Activated T-helper 2 cell treated with anti-CD3 and anti-CD28 coated beads, Interferon-gamma antibody, Interleukin-2, Interleukin-4, amounts not matched to agents 10 μg/mL and 5 μg/mL and 100 μg/mL, durations not matched to agents 14 hours and 24 hours and 36 hours (primary cell): ENCODE measurements at regions of chr4 and their contacts with region 1.

Region 1: GRCh38 chr4:17810260-17811077 is at the starts of genes DCAF16 and NCAPG:
- DNase-seq: peak; percentile 99
- H3K4me3 Mint-ChIP-seq: peak within 1 kb of the TSS; percentile 100
- H3K27ac Mint-ChIP-seq: peak within 1 kb of the TSS; percentile 100
- H3K4me1 Mint-ChIP-seq: peaks cover 62% of the 10 kb centered on the region
- H3K27me3 Mint-ChIP-seq: no peaks in the 10 kb centered on the region
- total RNA-seq, gene DCAF16: 41.1 and 41.7 TPM in 2 replicates
- total RNA-seq, gene NCAPG: 55.9 and 58.2 TPM in 2 replicates

Region 2: DNA sequence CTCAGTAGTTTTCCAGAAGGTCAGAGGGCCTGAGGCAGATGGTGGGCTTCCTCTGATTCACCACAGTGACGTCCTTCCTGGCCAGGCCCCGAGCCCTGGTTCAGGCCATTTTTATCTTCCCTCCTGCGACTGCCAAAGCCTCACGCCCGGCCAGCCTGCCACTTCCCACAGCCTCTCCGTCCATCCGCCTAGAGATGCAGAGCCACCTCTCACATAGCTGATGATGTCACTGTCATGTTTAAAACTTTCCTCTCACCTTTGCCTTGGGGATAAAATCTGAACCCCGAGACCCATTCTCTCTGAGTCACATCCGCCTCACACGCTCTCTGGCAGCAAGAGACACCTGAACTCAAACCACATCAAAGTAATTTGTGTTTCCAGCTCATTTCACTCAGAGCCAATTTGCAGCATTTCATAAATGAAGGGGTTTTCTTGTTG is 473.9 kb before region 1 on chr4:
- intact Hi-C with region 1: loop called (anchors 10 kb)
- DNase-seq: peak; percentile 80
- H3K4me3 Mint-ChIP-seq: no peak overlapping the region
- H3K27ac Mint-ChIP-seq: peak overlapping the region; percentile 79
- H3K4me1 Mint-ChIP-seq: peaks cover 38% of the 10 kb centered on the region
- H3K27me3 Mint-ChIP-seq: peaks cover 2% of the 10 kb centered on the region

Region 3: DNA sequence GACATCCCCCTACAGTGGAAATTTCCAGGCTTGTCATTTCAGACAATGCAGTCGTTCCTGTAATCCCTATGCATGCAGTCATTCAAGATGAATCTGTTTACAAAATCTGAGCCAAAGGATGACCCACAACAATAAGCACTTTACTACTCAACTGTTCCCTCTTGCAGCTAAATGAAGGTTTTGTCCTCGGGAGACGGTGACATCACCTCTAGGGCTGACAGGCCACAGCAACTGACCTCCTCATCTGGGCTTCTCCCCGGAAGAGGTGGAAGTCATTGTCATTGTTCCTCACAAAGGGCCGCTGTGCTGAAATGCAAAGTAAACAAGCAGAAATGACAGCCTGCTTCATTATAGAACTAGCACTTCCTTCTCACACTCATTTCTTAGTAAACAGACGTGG is 266.3 kb before region 1 on chr4:
- intact Hi-C with region 1: loop called (anchors 1 kb)
- DNase-seq: no peak
- H3K4me3 Mint-ChIP-seq: no peak overlapping the region
- H3K27ac Mint-ChIP-seq: no peak overlapping the region
- H3K4me1 Mint-ChIP-seq: peaks cover 6% of the 10 kb centered on the region
- H3K27me3 Mint-ChIP-seq: peaks cover 16% of the 10 kb centered on the region

Region 4: DNA sequence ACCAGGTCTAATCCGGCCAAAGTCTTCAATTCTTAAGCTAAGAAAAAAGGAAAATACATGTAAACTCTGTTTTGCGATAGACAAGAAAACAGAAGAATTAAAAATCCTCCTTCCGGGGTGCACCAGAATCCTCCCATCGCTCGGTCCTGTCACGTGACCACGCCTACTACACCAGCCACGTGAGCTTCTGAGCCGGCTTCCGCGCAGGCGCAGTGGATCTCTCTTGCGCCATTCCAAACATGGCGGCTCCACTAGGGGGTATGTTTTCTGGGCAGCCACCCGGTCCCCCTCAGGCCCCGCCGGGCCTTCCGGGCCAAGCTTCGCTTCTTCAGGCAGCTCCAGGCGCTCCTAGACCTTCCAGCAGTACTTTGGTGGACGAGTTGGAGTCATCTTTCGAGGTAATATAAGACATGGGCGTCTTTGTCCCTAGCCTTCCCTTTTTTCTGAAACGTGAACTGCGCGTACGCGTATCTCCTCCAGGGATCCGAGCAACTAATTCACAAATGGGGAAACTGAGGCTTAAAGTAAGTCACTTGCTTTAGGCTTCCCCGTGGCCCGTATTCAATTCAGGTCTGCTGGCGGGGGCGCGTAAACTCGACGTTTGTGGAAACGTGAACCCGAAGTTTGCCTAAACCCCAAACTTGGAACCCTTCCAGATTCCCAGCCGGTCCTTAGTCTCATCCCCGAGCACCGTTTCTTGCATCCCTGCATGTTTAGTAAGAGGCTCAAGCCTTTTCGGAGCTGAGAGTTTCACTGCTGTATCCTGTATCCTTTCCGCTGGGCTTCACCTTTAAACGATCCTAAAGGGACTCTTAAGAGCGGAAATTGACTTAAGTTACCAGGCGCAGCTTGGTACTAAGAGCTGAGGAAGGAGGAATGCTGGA is 195.8 kb before region 1 on chr4 and contains the start of gene MED28:
- intact Hi-C with region 1: loop called (anchors 1 kb)
- DNase-seq: peak; percentile 92
- H3K4me3 Mint-ChIP-seq: peak within 1 kb of the TSS; percentile 90
- H3K27ac Mint-ChIP-seq: peak within 1 kb of the TSS; percentile 91
- H3K4me1 Mint-ChIP-seq: peaks cover 24% of the 10 kb centered on the region
- H3K27me3 Mint-ChIP-seq: no peaks in the 10 kb centered on the region
- total RNA-seq, gene MED28: 53.2 and 55.7 TPM in 2 replicates

Region 5: GRCh38 chr4:18021722-18022571 is 211.5 kb after region 1 on chr4 and contains the start of gene LCORL:
- intact Hi-C with region 1: loop called (anchors 1 kb)
- DNase-seq: peak; percentile 83
- H3K4me3 Mint-ChIP-seq: peak within 1 kb of the TSS; percentile 92
- H3K27ac Mint-ChIP-seq: peak within 1 kb of the TSS; percentile 84
- H3K4me1 Mint-ChIP-seq: peaks cover 14% of the 10 kb centered on the region
- H3K27me3 Mint-ChIP-seq: peaks cover 57% of the 10 kb centered on the region
- total RNA-seq, gene LCORL: 9.5 and 12.8 TPM in 2 replicates